Calu3 (cell line): ENCODE measurements at regions of chr1 and their contacts with region 1.

Region 1: GRCh38 chr1:172745014-172745413 is 86.1 kb downstream of the FASLG start:
- DNase-seq: peak; percentile 64
- H3K4me3 Mint-ChIP-seq: peak overlapping the region; percentile 17
- H3K27ac Mint-ChIP-seq: peak overlapping the region; percentile 80
- H3K4me1 Mint-ChIP-seq: peaks cover 33% of the 10 kb centered on the region
- H3K27me3 Mint-ChIP-seq: no peaks in the 10 kb centered on the region
- CTCF ChIP-seq: peak; percentile 66

Region 2: DNA sequence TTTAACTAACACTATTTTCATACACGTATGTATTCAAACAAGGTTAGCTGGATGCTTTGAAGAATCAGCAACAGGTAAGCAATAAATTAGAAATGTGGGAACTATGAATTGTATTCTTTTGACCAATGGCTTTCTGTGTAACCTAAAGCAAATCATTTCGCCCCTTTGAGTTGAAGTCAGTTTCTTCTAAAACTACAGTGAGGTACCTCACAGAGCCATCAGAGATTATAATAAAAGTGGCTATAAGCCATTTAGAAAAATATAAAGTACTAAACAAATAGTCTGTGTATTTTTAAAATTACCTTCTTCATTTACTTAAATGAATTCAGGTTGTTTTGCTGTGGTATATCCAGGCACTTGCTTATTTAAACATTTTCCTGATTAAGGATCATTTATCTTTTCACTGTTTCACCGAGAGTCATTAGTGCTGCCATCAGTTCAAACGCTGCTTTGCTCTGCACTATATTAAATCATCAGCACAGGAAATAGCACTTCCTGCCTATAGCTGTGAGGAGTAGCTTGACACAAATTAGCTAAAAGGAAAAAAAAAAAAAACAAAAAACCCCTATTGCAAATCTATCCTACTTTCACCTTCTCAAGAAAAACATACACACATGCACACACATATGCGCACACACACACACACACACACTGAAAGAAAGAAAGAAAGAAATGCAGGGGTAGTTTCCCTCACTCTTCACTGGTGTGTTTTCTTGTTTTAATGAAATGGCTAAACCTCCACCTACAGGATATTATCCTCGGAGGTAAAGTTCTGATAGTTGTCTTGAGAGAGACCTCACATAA is 364.4 kb before region 1 on chr1:
- CTCF ChIA-PET with region 1: no interaction called
- intact Hi-C with region 1: no loop called
- DNase-seq: no peak
- H3K4me3 Mint-ChIP-seq: no peak overlapping the region
- H3K27ac Mint-ChIP-seq: no peak overlapping the region
- H3K4me1 Mint-ChIP-seq: peaks cover 24% of the 10 kb centered on the region
- H3K27me3 Mint-ChIP-seq: no peaks in the 10 kb centered on the region
- CTCF ChIP-seq: no peak

Region 3: DNA sequence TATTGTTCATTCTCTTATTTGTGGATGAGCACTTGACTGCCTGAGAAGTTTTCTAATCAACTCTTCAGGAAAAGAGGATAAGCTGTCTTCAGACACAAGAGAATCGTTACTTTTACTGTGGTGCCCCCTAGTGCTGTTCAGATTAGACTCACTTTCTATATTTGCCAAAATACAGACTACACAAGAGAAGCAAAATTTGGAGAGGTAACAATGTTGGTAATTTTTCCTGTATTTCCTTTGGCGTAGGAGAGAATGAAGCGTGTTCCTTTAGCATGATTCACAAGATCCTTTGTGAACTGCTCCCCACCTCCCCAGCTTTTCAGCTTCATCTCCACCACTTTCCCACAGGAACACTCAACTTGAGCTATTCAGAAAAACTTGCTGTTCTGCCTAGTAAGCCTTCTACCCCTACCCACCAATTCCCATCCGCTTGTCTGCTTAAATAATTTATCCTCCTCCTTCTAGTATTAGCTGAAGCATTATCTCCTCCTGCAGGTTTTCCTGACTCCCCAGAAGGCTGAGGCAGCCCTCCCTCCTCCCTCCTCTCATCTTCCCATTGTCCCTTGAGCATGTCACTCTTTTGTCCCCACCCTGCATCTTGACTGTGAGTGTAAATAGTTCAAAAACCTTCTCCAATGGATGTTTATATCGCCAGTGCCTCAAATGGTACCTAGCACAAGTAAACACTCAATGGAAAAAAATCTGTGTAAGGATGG is 457.6 kb after region 1 on chr1:
- CTCF ChIA-PET with region 1: interaction called, 27 read pairs
- intact Hi-C with region 1: loop called (anchors 1 kb)
- DNase-seq: peak; percentile 61
- H3K4me3 Mint-ChIP-seq: no peak overlapping the region
- H3K27ac Mint-ChIP-seq: no peak overlapping the region
- H3K4me1 Mint-ChIP-seq: peaks cover 19% of the 10 kb centered on the region
- H3K27me3 Mint-ChIP-seq: no peaks in the 10 kb centered on the region
- CTCF ChIP-seq: peak; percentile 72

Region 4: GRCh38 chr1:173409613-173410012 is 664.6 kb after region 1 on chr1:
- CTCF ChIA-PET with region 1: no interaction called
- intact Hi-C with region 1: loop called (anchors 2 kb)
- DNase-seq: no peak
- H3K4me3 Mint-ChIP-seq: no peak overlapping the region
- H3K27ac Mint-ChIP-seq: no peak overlapping the region
- H3K4me1 Mint-ChIP-seq: peaks cover 24% of the 10 kb centered on the region
- H3K27me3 Mint-ChIP-seq: no peaks in the 10 kb centered on the region
- CTCF ChIP-seq: no peak

Region 5: GRCh38 chr1:173824331-173825081 is 1079.5 kb after region 1 on chr1 and contains the starts of genes CENPL and DARS2:
- CTCF ChIA-PET with region 1: interaction called, 7 read pairs
- intact Hi-C with region 1: loop called (anchors 1 kb)
- DNase-seq: peak; percentile 93
- H3K4me3 Mint-ChIP-seq: peak within 1 kb of the TSS; percentile 97
- H3K27ac Mint-ChIP-seq: peak within 1 kb of the TSS; percentile 96
- H3K4me1 Mint-ChIP-seq: peaks cover 28% of the 10 kb centered on the region
- H3K27me3 Mint-ChIP-seq: no peaks in the 10 kb centered on the region
- CTCF ChIP-seq: no peak
- total RNA-seq, gene CENPL: 30.3 and 31.2 TPM in 2 replicates
- total RNA-seq, gene DARS2: 48.4 and 56.3 TPM in 2 replicates